ENCODE measurements at regions of chr15 and their contacts with region 1.

Region 1: GRCh38 chr15:74615508-74616365 is at the start of gene CLK3:
- DNase-seq: peak; percentile 82 to 99 (median 97)

Region 2: GRCh38 chr15:73991726-73992593 is 623.8 kb before region 1 on chr15 and contains the start of gene STOML1:
- intact Hi-C with region 1: loop called (anchors 5 kb)
- DNase-seq: peak; percentile 66 to 96 (median 92)

Region 3: DNA sequence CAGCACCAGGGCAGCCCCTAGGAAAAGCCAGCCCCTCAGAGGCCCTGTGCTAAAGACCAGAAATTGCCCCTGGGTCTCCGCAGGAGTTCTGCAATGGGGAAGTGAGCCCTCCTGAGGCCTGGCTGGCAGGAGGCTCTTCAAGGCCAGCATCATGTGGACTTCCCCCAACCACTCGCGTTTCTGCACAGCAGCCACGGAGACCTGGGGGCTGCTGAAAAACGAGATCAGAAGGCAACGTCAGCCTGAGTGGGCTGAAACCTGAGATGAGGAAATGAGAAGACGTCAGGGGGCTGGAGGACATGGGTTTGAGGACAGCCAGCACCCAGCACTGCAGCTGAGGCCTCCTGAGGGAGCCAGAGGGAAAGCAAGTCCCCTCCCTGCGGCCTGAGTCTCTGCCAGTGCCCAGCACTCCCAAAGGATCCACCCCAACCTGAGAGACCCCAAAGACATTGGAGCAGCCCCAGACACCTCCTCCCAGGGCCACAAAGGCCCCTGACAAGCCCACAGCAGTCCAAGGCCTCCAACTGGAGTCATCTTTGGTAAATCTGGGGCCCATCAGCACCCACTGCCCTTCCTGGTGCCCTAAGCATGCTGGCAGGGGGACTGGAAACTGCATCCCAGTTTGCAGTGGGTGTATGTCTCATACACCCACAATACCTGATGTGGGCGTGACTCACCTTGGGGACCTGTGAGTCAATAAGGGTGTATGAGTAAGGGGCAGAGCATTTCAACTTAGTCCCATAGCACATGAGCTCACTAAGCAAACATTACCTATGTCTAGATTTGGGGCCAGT is 219.1 kb before region 1 on chr15:
- intact Hi-C with region 1: no loop called
- DNase-seq: peak in 7 of 42 donors; percentile 14 to 58 (median 24)

Region 4: GRCh38 chr15:74460871-74461846 is 154.6 kb before region 1 on chr15 and contains the start of gene UBL7:
- intact Hi-C with region 1: loop called (anchors 5 kb)
- DNase-seq: peak; percentile 93 to 99 (median 98)

Region 5: GRCh38 chr15:74545880-74546656 is 69.7 kb before region 1 on chr15:
- intact Hi-C with region 1: loop called (anchors 2 kb)
- DNase-seq: peak; percentile 88 to 99 (median 96)

Region 6: DNA sequence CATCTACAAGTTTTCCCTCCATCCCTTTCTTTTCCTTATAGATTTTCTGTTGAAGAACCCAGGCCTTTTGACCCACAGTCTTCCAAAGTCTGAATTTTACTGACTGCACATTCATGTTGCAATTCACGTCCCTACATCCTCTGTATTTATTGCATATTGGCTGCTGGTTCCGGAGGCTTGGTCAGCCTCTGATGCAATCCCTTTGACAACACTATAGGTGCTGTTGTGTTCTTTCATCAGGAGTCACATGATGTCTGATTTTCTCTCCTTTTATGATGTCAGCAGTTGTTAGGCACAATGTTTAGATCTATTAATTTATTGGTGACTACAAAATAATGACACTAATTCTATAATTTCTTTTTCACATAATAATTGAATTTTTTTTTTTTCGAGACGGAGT is 100.9 kb after region 1 on chr15:
- intact Hi-C with region 1: no loop called
- DNase-seq: peak in 1 of 42 donors; percentile 9

Measured in head of caudate nucleus (tissue), 42 donors.